ENCODE measurements at regions of chr2 and their contacts with region 1.

Region 1: DNA sequence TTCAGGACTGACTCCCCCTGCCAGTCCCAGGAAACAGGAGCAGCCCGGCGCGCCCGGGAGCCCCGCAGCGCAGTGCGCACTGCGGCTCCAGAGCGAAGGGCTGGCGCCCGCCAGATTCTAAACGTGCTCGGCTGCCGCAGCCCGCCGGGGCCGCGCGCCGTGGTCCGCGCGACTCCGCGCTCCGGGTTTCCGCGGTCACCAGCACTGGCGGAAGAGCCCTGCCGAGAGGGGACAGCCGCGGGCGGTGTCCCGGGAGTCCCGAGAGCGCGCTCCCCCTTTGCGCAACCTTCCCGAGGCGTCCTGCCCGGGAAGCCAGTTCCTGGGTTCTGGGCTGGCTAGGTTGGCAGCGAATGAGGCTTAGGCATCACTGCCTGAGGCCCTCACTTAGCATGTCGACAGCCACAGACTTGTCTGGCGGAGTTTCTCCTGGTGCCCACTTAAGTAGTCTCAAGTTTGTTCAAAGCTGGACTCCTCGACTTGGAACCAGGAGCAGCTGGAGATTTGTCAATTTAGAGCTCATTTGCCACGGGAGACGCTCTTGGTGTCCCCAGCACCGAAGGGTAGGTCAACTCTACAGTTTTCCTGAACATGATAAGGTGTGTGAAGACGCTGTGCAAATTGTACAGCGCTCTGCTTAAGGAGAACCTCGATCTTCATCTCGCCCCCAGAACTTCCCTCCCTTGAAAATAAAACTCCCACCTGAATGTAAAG is 1.5 kb upstream of the VSNL1 start:
- DNase-seq: peak; percentile 95
- H3K4me3 ChIP-seq: peak overlapping the region; percentile 56 to 85 (median 72)
- H3K27ac ChIP-seq: peak overlapping the region; percentile 95
- H3K4me1 ChIP-seq: peaks cover 32% of the 10 kb centered on the region
- H3K27me3 ChIP-seq: no peaks in the 10 kb centered on the region
- CTCF ChIP-seq: no peak

Region 2: GRCh38 chr2:16773080-16773713 is 765.8 kb before region 1 on chr2:
- CTCF ChIA-PET with region 1: no interaction called
- dilution Hi-C with region 1: no loop called
- in situ Hi-C with region 1: no loop called
- intact Hi-C with region 1: loop called (anchors 1 kb)
- DNase-seq: peak; percentile 55
- H3K4me3 ChIP-seq: no peak overlapping the region
- H3K27ac ChIP-seq: no peak overlapping the region
- H3K4me1 ChIP-seq: no peaks in the 10 kb centered on the region
- H3K27me3 ChIP-seq: peaks cover 3% of the 10 kb centered on the region
- CTCF ChIP-seq: peak; percentile 57 to 73

Region 3: GRCh38 chr2:17429130-17429529 is 109.9 kb before region 1 on chr2:
- CTCF ChIA-PET with region 1: no interaction called
- dilution Hi-C with region 1: no loop called
- in situ Hi-C with region 1: no loop called
- intact Hi-C with region 1: loop called (anchors 2 kb)
- DNase-seq: peak; percentile 95
- H3K4me3 ChIP-seq: peak overlapping the region in 1 of 3 experiments; percentile 15
- H3K27ac ChIP-seq: peak overlapping the region; percentile 82
- H3K4me1 ChIP-seq: peaks cover 27% of the 10 kb centered on the region
- H3K27me3 ChIP-seq: no peaks in the 10 kb centered on the region
- CTCF ChIP-seq: no peak

Region 4: GRCh38 chr2:17479875-17480274 is 59.1 kb before region 1 on chr2:
- CTCF ChIA-PET with region 1: no interaction called
- dilution Hi-C with region 1: no loop called
- in situ Hi-C with region 1: loop called in 1 of 2 experiments (anchors 10 kb)
- intact Hi-C with region 1: loop called (anchors 1 kb)
- DNase-seq: peak; percentile 59
- H3K4me3 ChIP-seq: no peak overlapping the region
- H3K27ac ChIP-seq: no peak overlapping the region
- H3K4me1 ChIP-seq: peaks cover 33% of the 10 kb centered on the region
- H3K27me3 ChIP-seq: no peaks in the 10 kb centered on the region
- CTCF ChIP-seq: no peak

Region 5: DNA sequence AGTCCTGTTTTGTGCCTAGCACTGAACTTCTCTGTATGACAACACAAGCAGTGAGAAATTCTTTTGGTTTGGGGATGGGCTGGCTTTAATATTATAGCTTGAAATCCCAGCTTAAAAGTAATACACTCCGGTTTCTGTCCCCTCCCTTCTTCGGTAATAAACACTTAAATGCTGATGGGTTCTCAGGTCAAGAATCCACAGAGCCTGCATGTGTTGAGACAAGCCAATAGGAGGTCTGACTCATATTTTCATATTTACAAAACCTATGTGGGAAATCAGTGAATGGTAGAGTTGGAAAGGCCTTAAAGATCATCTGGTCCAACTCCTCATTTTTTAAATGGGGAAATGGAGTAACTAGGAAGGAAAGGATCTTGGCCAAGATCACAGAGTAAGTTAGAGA is 49.0 kb after region 1 on chr2:
- CTCF ChIA-PET with region 1: no interaction called
- dilution Hi-C with region 1: no loop called
- in situ Hi-C with region 1: no loop called
- intact Hi-C with region 1: loop called (anchors 1 kb)
- DNase-seq: peak; percentile 98
- H3K4me3 ChIP-seq: peak overlapping the region in 1 of 3 experiments; percentile 4
- H3K27ac ChIP-seq: peak overlapping the region; percentile 98
- H3K4me1 ChIP-seq: peaks cover 68% of the 10 kb centered on the region
- H3K27me3 ChIP-seq: no peaks in the 10 kb centered on the region
- CTCF ChIP-seq: no peak

Region 6: DNA sequence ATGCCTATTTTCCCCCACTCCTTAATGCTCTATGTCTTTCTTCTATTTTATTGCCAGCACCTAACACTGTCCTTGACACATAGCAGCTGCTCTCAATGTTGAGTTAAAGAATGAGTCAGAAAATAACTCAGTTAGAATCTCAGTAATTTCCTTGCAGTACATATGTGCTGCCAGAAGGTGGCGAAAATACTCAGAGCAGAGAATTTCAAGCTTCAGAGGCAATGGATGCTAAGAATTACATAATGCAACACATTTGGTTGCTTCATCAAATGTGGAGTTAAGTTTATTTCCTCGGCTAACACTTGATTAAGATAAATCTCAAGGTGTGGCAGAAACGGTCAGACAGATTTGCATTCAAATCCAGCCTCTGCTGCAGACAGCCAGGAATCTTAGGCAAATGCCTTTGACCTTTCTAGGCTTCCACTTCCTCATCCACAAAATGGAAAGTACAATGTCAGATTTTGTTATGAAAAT is 107.1 kb after region 1 on chr2:
- CTCF ChIA-PET with region 1: interaction called, 3 read pairs
- dilution Hi-C with region 1: no loop called
- in situ Hi-C with region 1: no loop called
- intact Hi-C with region 1: loop called (anchors 1 kb)
- DNase-seq: peak; percentile 84
- H3K4me3 ChIP-seq: no peak overlapping the region
- H3K27ac ChIP-seq: peak overlapping the region; percentile 28
- H3K4me1 ChIP-seq: peaks cover 37% of the 10 kb centered on the region
- H3K27me3 ChIP-seq: no peaks in the 10 kb centered on the region
- CTCF ChIP-seq: peak; percentile 77 to 90

Measured in mammary epithelial cell (primary cell).